Right cardiac atrium (tissue), 5 donors: ENCODE measurements at regions of chr14 and their contacts with region 1.

Region 1: GRCh38 chr14:68788996-68789820 is 3.7 kb downstream of the ZFP36L1 start:
- DNase-seq: peak; percentile 89 to 95 (median 94)
- ATAC-seq: peak; percentile 26 to 44
- H3K4me3 ChIP-seq: peak overlapping the region; percentile 90
- H3K27ac ChIP-seq: peak overlapping the region; percentile 54
- H3K4me1 ChIP-seq: peaks cover 4% of the 10 kb centered on the region
- H3K27me3 ChIP-seq: no peaks in the 10 kb centered on the region

Region 2: GRCh38 chr14:68248481-68249255 is 540.5 kb before region 1 on chr14:
- intact Hi-C with region 1: loop called in 2 of 4 experiments (anchors 5 to 10 kb)
- DNase-seq: peak; percentile 17 to 69 (median 68)
- ATAC-seq: peak; percentile 71 to 73
- H3K4me3 ChIP-seq: no peak overlapping the region
- H3K27ac ChIP-seq: peak overlapping the region; percentile 77
- H3K4me1 ChIP-seq: peaks cover 20% of the 10 kb centered on the region
- H3K27me3 ChIP-seq: no peaks in the 10 kb centered on the region

Region 3: GRCh38 chr14:68522510-68523325 is 266.5 kb before region 1 on chr14:
- intact Hi-C with region 1: loop called in 1 of 4 experiments (anchors 2 kb)
- DNase-seq: peak in 1 of 3 donors; percentile 63
- ATAC-seq: peak in 1 of 2 donors; percentile 52
- H3K4me3 ChIP-seq: no peak overlapping the region
- H3K27ac ChIP-seq: peak overlapping the region; percentile 94
- H3K4me1 ChIP-seq: peaks cover 27% of the 10 kb centered on the region
- H3K27me3 ChIP-seq: no peaks in the 10 kb centered on the region

Region 4: GRCh38 chr14:68663385-68664076 is 125.7 kb before region 1 on chr14:
- intact Hi-C with region 1: loop called in 2 of 4 experiments (anchors 10 kb)
- DNase-seq: no peak
- ATAC-seq: no peak
- H3K4me3 ChIP-seq: no peak overlapping the region
- H3K27ac ChIP-seq: no peak overlapping the region
- H3K4me1 ChIP-seq: peaks cover 12% of the 10 kb centered on the region
- H3K27me3 ChIP-seq: no peaks in the 10 kb centered on the region

Region 5: GRCh38 chr14:68685419-68686204 is 103.6 kb before region 1 on chr14:
- intact Hi-C with region 1: loop called in 2 of 4 experiments (anchors 5 to 10 kb)
- DNase-seq: peak in 1 of 3 donors; percentile 36
- ATAC-seq: no peak
- H3K4me3 ChIP-seq: no peak overlapping the region
- H3K27ac ChIP-seq: no peak overlapping the region
- H3K4me1 ChIP-seq: peaks cover 23% of the 10 kb centered on the region
- H3K27me3 ChIP-seq: no peaks in the 10 kb centered on the region

Region 6: GRCh38 chr14:68911594-68912227 is 122.5 kb after region 1 on chr14:
- intact Hi-C with region 1: no loop called
- DNase-seq: peak; percentile 69 to 87 (median 82)
- ATAC-seq: peak; percentile 78 to 84
- H3K4me3 ChIP-seq: no peak overlapping the region
- H3K27ac ChIP-seq: no peak overlapping the region
- H3K4me1 ChIP-seq: peaks cover 3% of the 10 kb centered on the region
- H3K27me3 ChIP-seq: no peaks in the 10 kb centered on the region

Region 7: GRCh38 chr14:69043596-69044260 is 254.5 kb after region 1 on chr14:
- intact Hi-C with region 1: no loop called
- DNase-seq: peak; percentile 45 to 61 (median 54)
- ATAC-seq: peak; percentile 43 to 56
- H3K4me3 ChIP-seq: no peak overlapping the region
- H3K27ac ChIP-seq: peak overlapping the region; percentile 76
- H3K4me1 ChIP-seq: peaks cover 37% of the 10 kb centered on the region
- H3K27me3 ChIP-seq: no peaks in the 10 kb centered on the region